Caco-2 (cell line): ENCODE measurements at regions of chr10 and their contacts with region 1.

Region 1: DNA sequence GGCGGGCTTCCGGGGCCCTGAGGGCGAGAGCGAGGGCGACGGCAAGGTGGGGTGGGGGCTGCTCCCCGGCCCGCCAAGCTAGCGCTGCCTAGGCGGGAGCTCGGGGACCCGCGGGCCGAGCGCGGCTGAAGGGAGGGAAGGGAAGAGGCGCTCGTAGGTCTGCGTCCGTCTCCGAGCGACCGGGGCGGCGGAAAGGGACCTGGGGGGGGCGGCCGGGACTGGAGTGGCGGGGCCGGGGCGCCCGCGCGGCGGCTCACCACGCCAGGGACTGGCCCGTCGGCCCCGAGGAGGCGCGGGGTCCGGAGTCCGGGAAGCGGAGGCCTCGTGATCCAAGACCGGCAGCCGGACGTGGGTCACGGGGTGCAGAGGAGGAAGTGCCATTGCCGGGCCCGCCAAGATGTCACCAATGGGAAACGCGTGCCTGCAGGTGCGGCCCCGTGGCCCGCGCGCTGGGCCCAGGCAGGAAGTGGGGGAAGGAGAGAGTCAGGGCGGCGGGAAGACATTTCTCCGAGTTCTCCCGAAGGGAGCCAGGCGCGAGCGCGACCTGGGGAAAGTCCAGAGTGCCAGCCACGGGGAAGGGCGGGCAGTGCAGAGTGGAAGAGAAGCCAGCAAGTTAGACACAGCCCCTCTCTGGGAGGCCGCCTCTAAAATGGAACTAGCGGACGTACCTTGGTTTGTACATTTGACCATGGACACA is 11.9 kb downstream of the HNRNPF start:
- DNase-seq: peak; percentile 99
- H3K4me3 ChIP-seq: peak overlapping the region; percentile 62
- H3K4me3 Mint-ChIP-seq: peak overlapping the region; percentile 81
- H3K27ac Mint-ChIP-seq: peak overlapping the region; percentile 94
- H3K4me1 ChIP-seq: peaks cover 59% of the 10 kb centered on the region
- H3K4me1 Mint-ChIP-seq: peaks cover 33% of the 10 kb centered on the region
- H3K27me3 ChIP-seq: no peaks in the 10 kb centered on the region
- H3K27me3 Mint-ChIP-seq: no peaks in the 10 kb centered on the region
- CTCF ChIP-seq: no peak

Region 2: DNA sequence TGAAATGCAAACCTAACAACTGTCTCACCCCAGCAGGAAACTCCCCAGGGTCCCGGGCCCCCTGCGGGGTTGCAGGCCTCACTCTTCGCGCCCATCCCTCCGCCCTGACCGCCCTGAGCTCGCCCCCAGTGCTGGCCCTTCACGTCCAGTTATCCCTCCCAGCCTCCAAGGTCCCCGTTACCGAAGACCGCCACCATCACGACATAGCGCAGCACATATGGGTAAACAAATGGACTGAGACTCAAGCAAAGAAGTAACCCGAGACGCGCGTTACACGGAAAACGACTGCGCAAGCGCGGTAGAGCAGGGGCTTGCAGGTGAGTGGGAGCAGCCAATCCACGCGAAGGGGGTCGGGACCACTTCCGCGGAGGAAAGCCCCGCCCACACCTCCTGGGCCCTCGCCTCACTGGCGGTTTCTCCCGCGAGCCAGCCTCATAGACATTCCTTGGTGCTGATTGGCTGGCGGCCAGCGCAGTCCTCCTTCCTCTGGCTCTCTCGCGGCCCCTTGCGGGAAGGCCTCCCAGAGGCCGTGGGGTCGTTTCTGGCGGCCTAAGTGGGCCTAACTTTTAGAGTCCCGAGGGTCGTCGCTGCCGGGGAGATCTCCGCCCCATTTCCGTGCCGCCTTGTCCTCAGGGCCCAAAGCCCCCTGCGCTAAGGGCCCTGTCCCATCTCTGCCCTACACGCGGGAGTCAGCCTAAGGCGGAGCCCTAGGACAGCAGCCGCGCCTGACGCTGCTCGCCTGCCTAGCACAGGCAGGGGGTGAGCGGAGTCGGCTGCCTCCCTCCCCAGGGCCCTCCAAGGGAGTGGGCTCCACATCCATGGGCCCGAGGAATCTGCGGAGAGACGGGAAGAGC is 34.9 kb before region 1 on chr10:
- CTCF ChIA-PET with region 1: no interaction called
- POLR2A ChIA-PET with region 1: interaction called, 14 read pairs
- intact Hi-C with region 1: loop called (anchors 1 kb)
- DNase-seq: peak; percentile 99
- H3K4me3 ChIP-seq: peak overlapping the region; percentile 66
- H3K4me3 Mint-ChIP-seq: peak overlapping the region; percentile 98
- H3K27ac Mint-ChIP-seq: peak overlapping the region; percentile 71
- H3K4me1 ChIP-seq: peaks cover 11% of the 10 kb centered on the region
- H3K4me1 Mint-ChIP-seq: peaks cover 16% of the 10 kb centered on the region
- H3K27me3 ChIP-seq: no peaks in the 10 kb centered on the region
- H3K27me3 Mint-ChIP-seq: no peaks in the 10 kb centered on the region
- CTCF ChIP-seq: peak; percentile 68 to 83

Region 3: GRCh38 chr10:43420369-43421200 is 23.5 kb after region 1 on chr10:
- CTCF ChIA-PET with region 1: no interaction called
- POLR2A ChIA-PET with region 1: interaction called, 19 read pairs
- intact Hi-C with region 1: no loop called
- DNase-seq: peak; percentile 97 to 98
- H3K4me3 ChIP-seq: peak overlapping the region; percentile 68
- H3K4me3 Mint-ChIP-seq: peak overlapping the region; percentile 96
- H3K27ac Mint-ChIP-seq: peak overlapping the region; percentile 99
- H3K4me1 ChIP-seq: peaks cover 9% of the 10 kb centered on the region; the same call in 1 of the 2 replicates
- H3K4me1 Mint-ChIP-seq: peaks cover 17% of the 10 kb centered on the region
- H3K27me3 ChIP-seq: no peaks in the 10 kb centered on the region
- H3K27me3 Mint-ChIP-seq: no peaks in the 10 kb centered on the region
- CTCF ChIP-seq: peak in 1 of 2 experiments; percentile 33

Region 4: DNA sequence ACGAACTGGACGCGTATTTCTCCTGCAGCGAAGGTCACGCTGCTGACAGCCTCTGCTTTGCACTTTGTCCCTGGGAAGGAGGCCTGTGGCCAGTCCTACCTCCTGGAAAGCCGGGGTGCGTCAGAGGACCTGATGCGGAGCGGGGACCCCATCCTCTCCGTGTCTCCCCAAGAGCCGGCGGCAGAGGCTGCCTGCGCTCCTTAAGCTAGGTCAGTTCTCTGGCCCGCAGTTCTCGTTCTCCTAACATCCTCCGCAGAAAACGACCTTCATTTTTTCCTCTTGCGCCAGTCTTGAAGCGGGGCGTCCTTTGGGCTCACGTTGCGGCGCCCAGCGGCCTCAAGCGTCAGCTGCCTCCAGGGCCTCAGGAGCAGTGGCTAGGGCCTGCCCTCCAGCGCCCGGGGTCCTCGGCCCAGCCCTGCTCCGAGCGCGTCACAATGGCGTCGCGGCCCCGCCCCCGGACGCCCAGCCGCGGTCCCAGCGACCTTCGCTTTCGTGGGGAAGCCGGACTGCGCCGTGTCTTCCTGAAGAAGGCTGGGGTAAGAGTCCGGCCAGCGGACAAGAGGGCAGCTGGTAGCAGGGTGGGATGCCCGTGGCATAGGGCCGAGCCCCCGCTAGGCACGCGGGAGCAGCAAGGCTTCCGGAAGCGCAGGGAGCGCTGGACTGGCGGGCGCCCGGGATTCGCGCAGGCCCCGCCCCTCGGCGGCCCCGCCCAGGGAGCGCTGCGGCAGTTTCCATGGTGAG is 39.5 kb after region 1 on chr10 and contains the start of gene ZNF487:
- CTCF ChIA-PET with region 1: interaction called, 8 read pairs
- POLR2A ChIA-PET with region 1: interaction called, 40 read pairs
- intact Hi-C with region 1: loop called (anchors 1 kb)
- DNase-seq: peak; percentile 94 to 98
- H3K4me3 ChIP-seq: peak within 1 kb of the TSS; percentile 87
- H3K4me3 Mint-ChIP-seq: peak within 1 kb of the TSS; percentile 97
- H3K27ac Mint-ChIP-seq: peak within 1 kb of the TSS; percentile 98
- H3K4me1 ChIP-seq: peaks cover 10% of the 10 kb centered on the region; the same call in 1 of the 2 replicates
- H3K4me1 Mint-ChIP-seq: no peaks in the 10 kb centered on the region
- H3K27me3 ChIP-seq: no peaks in the 10 kb centered on the region
- H3K27me3 Mint-ChIP-seq: no peaks in the 10 kb centered on the region
- CTCF ChIP-seq: peak in 1 of 2 experiments; percentile 62
- total RNA-seq, gene ZNF487: 5.0 and 6.5 TPM in 2 replicates

Region 5: DNA sequence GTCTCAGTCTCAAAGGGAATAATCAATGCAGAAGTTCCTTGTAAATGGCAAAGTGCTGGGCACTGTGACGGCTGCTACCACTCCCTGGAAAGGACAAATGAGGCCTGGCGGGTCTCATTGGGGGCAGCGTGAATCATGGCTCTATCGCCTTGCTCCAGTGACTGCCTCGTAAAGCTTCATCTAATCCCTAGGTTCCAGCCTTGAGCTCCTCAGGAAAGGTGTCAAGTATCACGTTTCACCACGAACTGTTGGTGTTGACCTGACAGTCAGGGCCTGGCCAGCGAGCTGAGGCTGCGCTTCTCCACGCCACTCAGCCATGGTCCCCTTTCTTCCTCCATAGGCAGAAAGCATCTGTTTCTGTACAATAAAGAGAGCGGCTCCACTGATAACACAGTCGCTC is 378.3 kb after region 1 on chr10:
- CTCF ChIA-PET with region 1: no interaction called
- POLR2A ChIA-PET with region 1: no interaction called
- intact Hi-C with region 1: no loop called
- DNase-seq: no peak
- H3K4me3 ChIP-seq: no peak overlapping the region
- H3K4me3 Mint-ChIP-seq: no peak overlapping the region
- H3K27ac Mint-ChIP-seq: no peak overlapping the region
- H3K4me1 ChIP-seq: no peaks in the 10 kb centered on the region
- H3K4me1 Mint-ChIP-seq: no peaks in the 10 kb centered on the region
- H3K27me3 ChIP-seq: no peaks in the 10 kb centered on the region
- H3K27me3 Mint-ChIP-seq: peaks cover 12% of the 10 kb centered on the region
- CTCF ChIP-seq: no peak